Activated B cell treated with CpG ODN at 0.5 μM for 24 hours (primary cell): ENCODE measurements at regions of chr6 and their contacts with region 1.

Region 1: DNA sequence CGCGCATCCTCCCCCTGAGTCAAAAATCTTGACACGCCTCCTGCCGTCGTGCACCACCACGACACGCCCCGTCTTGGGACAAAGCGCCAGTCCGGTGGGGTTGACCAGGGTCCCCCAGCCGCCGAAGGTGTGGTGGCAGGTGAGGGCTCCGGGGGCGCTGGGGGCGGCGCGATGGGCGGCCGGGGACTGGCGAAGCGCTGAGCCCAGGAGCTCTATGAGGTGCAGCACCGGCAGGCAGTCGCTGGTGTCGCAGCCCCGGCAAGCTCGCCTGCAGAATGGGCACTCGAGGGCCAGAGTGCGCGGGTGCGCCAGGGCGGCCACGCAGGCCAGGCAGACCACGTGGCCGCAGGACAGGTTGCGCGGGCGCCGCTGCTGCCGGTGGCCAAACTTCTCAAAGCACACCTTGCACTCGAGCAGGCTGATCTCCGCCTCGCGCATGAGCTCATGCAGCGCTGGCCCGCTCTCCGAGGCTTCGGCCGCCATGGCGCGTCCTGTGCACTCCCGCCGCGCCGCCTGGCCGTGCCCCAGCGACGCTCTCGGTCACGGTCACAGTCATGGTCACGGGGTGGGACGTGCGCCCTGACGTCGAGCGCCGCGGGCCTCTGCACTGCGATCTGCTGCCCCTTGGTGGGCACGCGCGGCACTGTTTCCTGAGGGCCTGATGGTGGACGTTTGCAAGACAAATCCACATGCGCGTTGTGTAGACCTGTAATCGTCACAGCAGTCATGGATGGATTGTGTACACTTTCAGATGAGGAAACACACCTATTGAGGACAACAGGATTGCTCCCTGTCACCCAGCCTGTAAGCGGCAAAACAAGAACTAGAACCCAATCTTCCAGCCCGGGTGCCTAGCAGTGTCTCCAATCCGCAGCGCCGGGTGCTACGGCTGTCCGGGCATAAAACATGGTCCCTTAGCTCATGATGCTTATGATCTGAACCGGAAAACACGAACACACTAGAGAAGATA is at the start of gene NHLRC1:
- DNase-seq: peak; percentile 67
- ATAC-seq: peak; percentile 99
- H3K4me3 Mint-ChIP-seq: peak within 1 kb of the TSS; percentile 78
- H3K27ac Mint-ChIP-seq: no peak within 1 kb of the TSS
- H3K4me1 Mint-ChIP-seq: peaks cover 12% of the 10 kb centered on the region
- H3K27me3 Mint-ChIP-seq: no peaks in the 10 kb centered on the region
- CTCF ChIP-seq: no peak
- total RNA-seq, gene NHLRC1: 0.88 and 1.2 TPM in 2 replicates

Region 2: GRCh38 chr6:17584241-17584803 is 538.1 kb before region 1 on chr6:
- CTCF ChIA-PET with region 1: no interaction called
- POLR2A ChIA-PET with region 1: no interaction called
- intact Hi-C with region 1: loop called (anchors 1 kb)
- DNase-seq: no peak
- ATAC-seq: peak; percentile 52
- H3K4me3 Mint-ChIP-seq: no peak overlapping the region
- H3K27ac Mint-ChIP-seq: peak overlapping the region; percentile 19
- H3K4me1 Mint-ChIP-seq: peaks cover 3% of the 10 kb centered on the region
- H3K27me3 Mint-ChIP-seq: peaks cover 2% of the 10 kb centered on the region
- CTCF ChIP-seq: peak; percentile 83

Region 3: DNA sequence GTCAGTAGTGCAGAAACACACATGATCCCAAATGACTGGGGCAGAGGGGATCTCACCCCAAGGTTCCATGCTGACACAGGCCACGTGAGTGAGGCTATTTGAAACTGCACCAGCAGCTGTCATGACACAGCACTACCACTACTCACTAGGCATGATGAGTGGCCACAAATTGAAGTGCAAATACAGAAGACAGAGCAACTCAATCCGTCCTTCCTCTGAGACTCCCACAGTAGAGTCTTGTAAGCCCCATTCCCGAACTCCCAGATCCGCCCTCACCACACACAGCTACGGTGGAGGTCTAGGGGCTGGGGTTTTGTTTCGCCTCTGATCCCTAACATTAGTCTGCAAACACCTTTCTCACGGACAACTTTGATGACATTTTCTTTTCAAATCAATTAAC is 302.4 kb before region 1 on chr6:
- CTCF ChIA-PET with region 1: no interaction called
- POLR2A ChIA-PET with region 1: no interaction called
- intact Hi-C with region 1: loop called (anchors 2 kb)
- DNase-seq: no peak
- ATAC-seq: no peak
- H3K4me3 Mint-ChIP-seq: no peak overlapping the region
- H3K27ac Mint-ChIP-seq: no peak overlapping the region
- H3K4me1 Mint-ChIP-seq: no peaks in the 10 kb centered on the region
- H3K27me3 Mint-ChIP-seq: no peaks in the 10 kb centered on the region
- CTCF ChIP-seq: no peak

Region 4: GRCh38 chr6:17987576-17988421 is 134.6 kb before region 1 on chr6 and contains the start of gene KIF13A:
- CTCF ChIA-PET with region 1: no interaction called
- POLR2A ChIA-PET with region 1: no interaction called
- intact Hi-C with region 1: loop called (anchors 5 kb)
- DNase-seq: peak; percentile 72
- ATAC-seq: peak; percentile 76
- H3K4me3 Mint-ChIP-seq: peak within 1 kb of the TSS; percentile 91
- H3K27ac Mint-ChIP-seq: peak within 1 kb of the TSS; percentile 88
- H3K4me1 Mint-ChIP-seq: peaks cover 32% of the 10 kb centered on the region
- H3K27me3 Mint-ChIP-seq: no peaks in the 10 kb centered on the region
- CTCF ChIP-seq: no peak
- total RNA-seq, gene KIF13A: 13.1 and 14.1 TPM in 2 replicates

Region 5: DNA sequence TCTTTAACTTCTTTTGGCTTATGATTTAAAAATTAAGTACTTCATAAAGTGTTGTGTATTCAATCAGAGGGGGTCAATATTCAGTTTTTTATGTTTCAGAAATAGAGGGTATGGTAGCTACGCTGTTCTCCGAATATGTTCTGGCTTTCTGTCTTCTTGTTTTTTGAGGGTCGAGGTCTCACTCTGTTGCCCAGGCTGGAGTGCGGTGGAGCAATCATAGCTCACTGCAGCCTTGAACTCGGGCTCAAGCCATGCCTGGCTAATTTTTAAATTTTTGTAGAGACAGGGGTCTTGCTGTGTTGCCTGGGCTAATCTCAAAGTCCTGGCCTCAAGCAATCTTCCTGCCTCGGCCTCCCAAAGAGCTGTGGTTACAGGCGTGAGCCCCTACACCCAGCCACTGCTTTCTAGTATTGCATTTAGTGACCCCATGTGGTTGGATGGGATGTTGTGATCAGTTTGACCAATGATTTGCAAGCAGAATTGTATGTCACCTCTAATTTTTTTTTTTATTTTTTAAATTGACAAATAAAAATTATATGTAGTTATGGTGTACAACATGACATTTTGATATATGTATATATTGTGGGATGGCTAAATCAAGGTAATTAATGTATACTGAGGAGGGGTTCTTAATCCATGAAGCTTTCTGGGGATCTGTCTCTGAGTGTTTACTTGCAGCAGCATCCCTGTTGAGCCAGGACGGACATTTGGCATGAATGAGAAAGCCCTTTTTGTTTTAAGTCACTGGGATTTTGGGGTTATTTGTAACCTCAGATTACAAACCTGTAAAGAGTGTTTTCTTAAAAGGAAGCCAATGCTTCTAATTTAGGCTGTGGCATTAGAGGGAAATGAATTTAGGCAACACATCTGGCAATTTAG is 180.4 kb after region 1 on chr6:
- CTCF ChIA-PET with region 1: interaction called, 7 read pairs
- POLR2A ChIA-PET with region 1: no interaction called
- intact Hi-C with region 1: loop called (anchors 5 kb)
- DNase-seq: no peak
- ATAC-seq: no peak
- H3K4me3 Mint-ChIP-seq: no peak overlapping the region
- H3K27ac Mint-ChIP-seq: no peak overlapping the region
- H3K4me1 Mint-ChIP-seq: no peaks in the 10 kb centered on the region
- H3K27me3 Mint-ChIP-seq: no peaks in the 10 kb centered on the region
- CTCF ChIP-seq: no peak

Region 6: GRCh38 chr6:18323935-18324705 is 201.7 kb after region 1 on chr6:
- CTCF ChIA-PET with region 1: interaction called, 3 read pairs
- POLR2A ChIA-PET with region 1: no interaction called
- intact Hi-C with region 1: loop called (anchors 5 kb)
- DNase-seq: no peak
- ATAC-seq: peak; percentile 62
- H3K4me3 Mint-ChIP-seq: no peak overlapping the region
- H3K27ac Mint-ChIP-seq: no peak overlapping the region
- H3K4me1 Mint-ChIP-seq: peaks cover 34% of the 10 kb centered on the region
- H3K27me3 Mint-ChIP-seq: no peaks in the 10 kb centered on the region
- CTCF ChIP-seq: peak; percentile 44

Region 7: GRCh38 chr6:18503593-18504231 is 381.3 kb after region 1 on chr6:
- CTCF ChIA-PET with region 1: interaction called, 15 read pairs
- POLR2A ChIA-PET with region 1: interaction called, 3 read pairs
- intact Hi-C with region 1: loop called (anchors 2 kb)
- DNase-seq: no peak
- ATAC-seq: peak; percentile 88
- H3K4me3 Mint-ChIP-seq: peak overlapping the region; percentile 73
- H3K27ac Mint-ChIP-seq: no peak overlapping the region
- H3K4me1 Mint-ChIP-seq: peaks cover 14% of the 10 kb centered on the region
- H3K27me3 Mint-ChIP-seq: no peaks in the 10 kb centered on the region
- CTCF ChIP-seq: peak; percentile 79